ENCODE measurements at regions of chr4 and their contacts with region 1.

Region 1: GRCh38 chr4:165787516-165788274 is 85.3 kb upstream of the TLL1 start:
- DNase-seq: no peak
- H3K4me3 ChIP-seq: no peak overlapping the region
- H3K27ac ChIP-seq: no peak overlapping the region
- H3K4me1 ChIP-seq: no peaks in the 10 kb centered on the region
- H3K27me3 ChIP-seq: no peaks in the 10 kb centered on the region
- CTCF ChIP-seq: no peak
- POLR2A ChIP-seq: no peak

Region 2: GRCh38 chr4:165799384-165799815 is 11.7 kb after region 1 on chr4:
- CTCF ChIA-PET with region 1: interaction called, 10 read pairs
- POLR2A ChIA-PET with region 1: no interaction called
- dilution Hi-C with region 1: no loop called
- intact Hi-C with region 1: no loop called
- DNase-seq: no peak
- H3K4me3 ChIP-seq: no peak overlapping the region
- H3K27ac ChIP-seq: no peak overlapping the region
- H3K4me1 ChIP-seq: no peaks in the 10 kb centered on the region
- H3K27me3 ChIP-seq: no peaks in the 10 kb centered on the region
- CTCF ChIP-seq: no peak
- POLR2A ChIP-seq: no peak